Activated naive CD4-positive, alpha-beta T cell treated with anti-CD3 and anti-CD28 coated beads, Interleukin-2, amount 10 ng/mL, durations not matched to agents 7 days and 5 days (primary cell): ENCODE measurements at regions of chr2 and their contacts with region 1.

Region 1: GRCh38 chr2:169928463-169928864 is 101.2 kb downstream of the UBR3 start:
- DNase-seq: no peak
- H3K4me3 Mint-ChIP-seq: no peak overlapping the region
- H3K27ac Mint-ChIP-seq: no peak overlapping the region
- H3K4me1 Mint-ChIP-seq: no peaks in the 10 kb centered on the region
- H3K27me3 Mint-ChIP-seq: no peaks in the 10 kb centered on the region

Region 2: DNA sequence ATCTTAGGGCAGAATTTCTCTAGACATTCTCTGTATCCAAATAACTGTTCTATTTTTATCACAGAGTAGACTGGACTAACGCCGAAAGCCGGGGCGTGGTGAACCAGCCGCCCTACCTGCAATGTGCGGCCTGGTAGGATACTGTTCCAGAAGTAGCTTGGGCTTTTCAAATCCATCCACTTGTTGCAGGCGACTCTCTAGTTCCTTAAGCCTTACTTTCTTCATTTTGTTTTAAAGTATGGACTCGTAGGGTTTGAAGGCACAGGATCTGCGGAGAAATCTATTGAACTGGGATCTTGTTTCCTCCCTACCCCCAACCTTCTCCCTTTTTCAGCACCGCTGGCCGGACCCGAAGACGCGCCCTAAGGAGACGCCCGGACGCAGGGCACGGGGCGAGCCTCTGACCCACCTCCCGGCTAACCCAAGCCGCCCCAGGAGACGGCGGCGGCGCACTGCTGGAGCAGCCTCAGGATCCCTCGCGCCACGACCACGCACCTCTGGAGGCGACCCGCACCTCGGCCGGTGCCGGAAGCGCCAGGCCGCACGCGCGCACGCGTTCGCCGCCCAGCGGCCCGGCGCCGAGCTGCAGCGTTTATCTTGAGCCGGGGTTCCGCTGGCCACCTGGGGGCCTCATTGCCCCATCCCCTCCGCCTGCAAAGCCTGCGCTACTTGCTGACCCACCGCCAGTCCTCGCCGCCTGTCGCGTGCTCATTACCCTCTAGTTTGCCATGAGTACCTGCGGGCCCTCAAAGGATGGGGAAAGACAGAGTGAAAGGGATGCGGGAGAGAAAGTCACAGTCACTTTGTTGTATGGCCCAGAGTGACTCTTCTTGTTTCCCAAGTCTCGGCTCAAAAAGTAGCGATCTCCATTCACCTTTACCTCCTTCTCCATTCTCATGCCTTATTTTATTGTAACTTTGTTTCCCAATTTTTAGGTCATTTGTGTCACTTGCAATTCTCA is 103.8 kb before region 1 on chr2 and contains the start of gene METTL5:
- CTCF ChIA-PET with region 1: interaction called, 10 read pairs
- DNase-seq: peak; percentile 82
- H3K4me3 Mint-ChIP-seq: peak within 1 kb of the TSS; percentile 82
- H3K27ac Mint-ChIP-seq: peak within 1 kb of the TSS; percentile 86
- H3K4me1 Mint-ChIP-seq: peaks cover 62% of the 10 kb centered on the region
- H3K27me3 Mint-ChIP-seq: no peaks in the 10 kb centered on the region